Astrocyte of the cerebellum (primary cell): ENCODE measurements at regions of chr17 and their contacts with region 1.

Region 1: GRCh38 chr17:76255801-76256429 is 9.2 kb upstream of the UBALD2 start:
- DNase-seq: no peak
- H3K4me3 ChIP-seq: no peak overlapping the region
- CTCF ChIP-seq: no peak

Region 2: DNA sequence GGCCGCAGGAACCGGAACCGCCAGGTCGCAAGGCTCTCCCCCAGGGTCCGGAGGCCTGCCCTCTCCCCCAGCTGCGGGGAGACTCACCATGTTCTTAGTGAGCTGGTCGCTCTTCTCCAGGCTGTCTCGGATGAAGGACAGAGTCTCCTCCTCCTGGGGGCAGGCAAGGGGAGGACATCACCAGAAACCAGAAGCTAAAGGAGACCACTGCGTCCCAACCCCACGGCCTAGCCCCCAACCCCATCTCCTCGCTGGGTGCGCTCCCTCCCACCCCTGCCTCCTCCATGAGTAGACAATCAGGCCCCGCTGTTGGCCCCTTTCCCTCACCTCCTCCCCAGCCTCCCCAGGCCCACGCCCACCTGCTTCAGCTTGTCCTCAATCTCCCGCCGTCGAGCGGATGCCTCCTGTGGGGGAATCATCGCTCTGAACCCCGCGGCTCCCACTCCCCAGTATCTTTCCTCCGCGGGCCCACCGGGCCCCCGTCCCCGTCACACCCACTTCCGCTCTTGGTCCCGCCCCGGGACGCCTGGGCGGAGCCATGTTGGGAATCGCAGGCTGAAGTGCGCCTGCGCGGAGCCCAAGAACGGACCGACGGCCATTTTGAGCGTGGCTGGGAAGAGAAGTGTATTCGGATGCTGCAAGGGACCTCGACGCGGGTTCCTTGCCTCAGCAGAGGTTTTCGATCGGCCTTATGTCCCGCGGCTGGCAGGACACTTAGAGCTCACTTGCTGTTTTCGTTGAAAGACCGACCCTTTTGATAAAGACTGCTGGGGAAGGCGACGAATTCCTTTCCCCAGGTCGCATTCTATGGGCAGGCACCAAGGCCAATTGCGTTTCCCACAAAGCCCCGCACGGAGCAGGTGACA is 152.4 kb before region 1 on chr17 and contains the start of gene EXOC7:
- in situ Hi-C with region 1: no loop called
- DNase-seq: peak; percentile 73
- H3K4me3 ChIP-seq: peak within 1 kb of the TSS; percentile 70
- CTCF ChIP-seq: peak; percentile 11

Region 3: DNA sequence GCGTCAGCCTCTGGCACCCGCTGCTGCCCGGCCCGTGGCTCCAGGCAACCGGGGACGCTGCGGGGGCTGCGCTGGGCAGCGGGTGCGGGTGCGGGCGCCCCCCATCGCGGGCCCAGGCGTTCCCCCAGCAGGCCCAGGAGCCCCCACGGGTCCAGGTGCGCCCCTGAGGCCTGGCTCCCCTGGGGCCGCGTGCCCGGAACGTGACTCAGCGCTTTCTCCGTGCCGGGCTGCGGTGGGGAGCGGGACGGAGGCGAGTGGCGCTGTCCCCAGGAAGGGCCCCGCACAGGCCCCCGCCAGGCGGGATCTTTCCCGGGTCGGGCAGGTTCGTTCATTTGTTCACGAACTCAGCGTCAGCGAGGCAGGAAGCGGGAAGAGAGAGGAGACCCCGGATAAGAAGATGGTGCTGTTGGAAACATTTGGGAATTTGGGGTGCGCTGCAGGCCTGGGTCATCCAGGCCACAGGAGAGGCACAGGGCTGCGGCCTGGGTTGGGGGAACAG is 133.9 kb before region 1 on chr17:
- in situ Hi-C with region 1: no loop called
- DNase-seq: no peak
- H3K4me3 ChIP-seq: no peak overlapping the region
- CTCF ChIP-seq: no peak

Region 4: GRCh38 chr17:76204277-76204676 is 51.6 kb before region 1 on chr17:
- in situ Hi-C with region 1: loop called (anchors 5 kb)
- DNase-seq: peak; percentile 18
- H3K4me3 ChIP-seq: no peak overlapping the region
- CTCF ChIP-seq: no peak

Region 5: GRCh38 chr17:76219670-76220383 is 36.1 kb before region 1 on chr17:
- in situ Hi-C with region 1: no loop called
- DNase-seq: no peak
- H3K4me3 ChIP-seq: no peak overlapping the region
- CTCF ChIP-seq: no peak